ENCODE measurements at regions of chr2 and their contacts with region 1.

Region 1: GRCh38 chr2:40554668-40555285 is 102.9 kb upstream of the SLC8A1 start:
- DNase-seq: peak; percentile 64
- H3K4me3 ChIP-seq: no peak overlapping the region
- H3K27ac ChIP-seq: no peak overlapping the region
- H3K4me1 ChIP-seq: no peaks in the 10 kb centered on the region
- H3K27me3 ChIP-seq: no peaks in the 10 kb centered on the region
- CTCF ChIP-seq: peak; percentile 70 to 80 (median 74)
- EP300 ChIP-seq: no peak
- POLR2A ChIP-seq: no peak

Region 2: DNA sequence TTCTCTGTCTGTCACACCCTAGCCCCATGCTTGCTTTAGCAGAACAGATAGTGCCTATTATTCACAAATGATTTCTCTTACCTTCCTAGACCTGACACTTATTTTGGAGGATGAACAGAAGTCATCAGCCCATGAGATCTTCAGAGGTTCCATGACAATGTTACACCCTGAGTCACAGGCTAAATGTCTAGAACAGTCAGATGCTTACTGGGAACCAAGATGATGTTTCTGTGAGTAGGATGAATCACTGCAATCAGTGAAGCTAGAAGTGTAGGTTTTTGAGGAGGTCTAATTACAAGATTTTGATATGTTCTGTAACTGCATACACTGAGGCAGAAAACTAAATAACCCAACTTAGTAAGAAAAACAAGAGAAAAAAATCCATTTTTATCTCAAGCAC is 652.7 kb before region 1 on chr2:
- in situ Hi-C with region 1: loop called in 2 of 4 experiments (anchors 10 to 25 kb)
- intact Hi-C with region 1: no loop called
- DNase-seq: no peak
- H3K4me3 ChIP-seq: no peak overlapping the region
- H3K27ac ChIP-seq: no peak overlapping the region
- H3K4me1 ChIP-seq: no peaks in the 10 kb centered on the region
- H3K27me3 ChIP-seq: no peaks in the 10 kb centered on the region
- CTCF ChIP-seq: no peak
- EP300 ChIP-seq: no peak
- POLR2A ChIP-seq: no peak